Left ventricle myocardium superior (tissue), 1 donor: ENCODE measurements at regions of chr3 and their contacts with region 1.

Region 1: GRCh38 chr3:196867507-196868296 is at the start of gene SENP5:
- DNase-seq: peak; percentile 96
- ATAC-seq: peak; percentile 100
- total RNA-seq, gene SENP5: 19.6 TPM

Region 2: DNA sequence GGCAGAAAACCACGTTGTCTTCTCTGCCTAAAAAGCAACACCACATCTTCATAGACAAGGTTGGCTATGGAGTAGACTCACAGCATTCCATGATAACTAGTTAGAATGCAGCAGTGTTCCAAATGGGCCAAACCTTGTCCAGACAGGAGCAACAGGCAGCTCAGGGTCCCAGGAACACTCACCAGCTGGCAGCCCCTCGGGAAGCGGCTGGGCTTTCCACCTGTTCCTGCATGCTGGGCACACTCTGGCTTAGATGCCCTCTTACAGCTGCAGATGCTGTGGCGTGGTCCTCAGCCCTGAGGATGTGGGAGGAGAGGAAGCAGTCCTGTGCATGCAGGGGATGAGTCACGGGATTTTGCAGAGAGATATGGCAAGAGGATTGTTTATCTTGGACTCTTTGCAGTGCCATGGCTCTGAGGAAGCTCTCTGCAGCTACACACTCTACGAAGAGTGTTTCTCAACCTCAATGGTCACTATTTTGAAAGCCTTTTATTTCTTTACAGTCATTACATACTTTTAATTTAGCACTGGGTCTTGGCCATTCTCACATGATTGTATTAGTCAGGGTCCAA is 216.9 kb before region 1 on chr3:
- intact Hi-C with region 1: no loop called
- DNase-seq: peak; percentile 57
- ATAC-seq: peak; percentile 97

Region 3: DNA sequence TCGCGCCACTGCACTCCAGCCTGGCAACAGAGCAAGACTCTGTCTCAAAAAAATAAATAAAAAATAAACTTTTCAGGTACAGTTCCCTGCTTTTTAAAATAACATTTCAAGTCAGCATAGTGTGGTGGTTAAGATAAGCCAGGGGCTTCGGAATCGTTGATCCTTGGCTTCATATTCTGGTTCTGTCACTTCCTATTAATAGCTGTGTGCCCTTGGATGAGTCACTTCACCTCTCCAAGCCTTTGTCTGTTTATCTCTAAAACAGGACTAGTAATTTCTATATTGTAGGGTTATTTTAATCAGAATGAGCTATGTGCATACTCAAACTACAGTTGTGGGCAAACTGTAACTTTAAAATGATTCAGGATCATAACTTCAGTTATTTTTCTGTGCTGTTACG is 53.8 kb before region 1 on chr3:
- intact Hi-C with region 1: no loop called
- DNase-seq: no peak
- ATAC-seq: peak; percentile 86

Region 4: GRCh38 chr3:196942226-196942914 is 74.7 kb after region 1 on chr3 and contains the start of gene NCBP2:
- intact Hi-C with region 1: loop called (anchors 10 kb)
- DNase-seq: peak; percentile 99
- ATAC-seq: peak; percentile 97
- total RNA-seq, gene NCBP2: 31.0 TPM

Region 5: GRCh38 chr3:197224034-197224444 is 356.3 kb after region 1 on chr3:
- intact Hi-C with region 1: no loop called
- DNase-seq: no peak
- ATAC-seq: peak; percentile 42